OCI-LY7 (cell line): ENCODE measurements at regions of chr13 and their contacts with region 1.

Region 1: GRCh38 chr13:37944869-37945442 is 75.4 kb upstream of the TRPC4 start:
- DNase-seq: peak; percentile 1
- H3K4me3 ChIP-seq: no peak overlapping the region
- H3K27ac ChIP-seq: no peak overlapping the region
- H3K4me1 ChIP-seq: no peaks in the 10 kb centered on the region
- CTCF ChIP-seq: no peak

Region 2: GRCh38 chr13:37956536-37956935 is 11.6 kb after region 1 on chr13:
- CTCF ChIA-PET with region 1: no interaction called
- POLR2A ChIA-PET with region 1: interaction called, 16 read pairs
- intact Hi-C with region 1: no loop called
- DNase-seq: no peak
- H3K4me3 ChIP-seq: no peak overlapping the region
- H3K27ac ChIP-seq: no peak overlapping the region
- H3K4me1 ChIP-seq: no peaks in the 10 kb centered on the region
- CTCF ChIP-seq: no peak

Region 3: DNA sequence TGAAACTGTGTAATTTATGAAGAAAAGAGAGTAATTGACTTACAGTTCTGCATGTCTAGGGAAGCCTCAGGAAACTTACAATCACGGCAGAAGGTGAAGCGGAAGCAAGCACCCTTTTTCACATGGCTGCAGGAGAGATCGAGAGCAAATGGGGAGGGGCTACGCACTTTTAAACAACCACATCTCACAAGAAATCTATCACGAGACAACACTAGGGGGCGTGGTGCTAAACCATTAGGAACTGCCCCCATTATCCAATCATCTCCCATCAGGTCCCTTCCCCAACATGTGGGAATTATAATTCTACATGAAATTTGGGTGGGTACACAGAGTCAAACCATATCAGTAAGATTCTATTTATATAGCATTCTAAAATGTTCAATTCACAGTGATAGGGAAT is 39.4 kb after region 1 on chr13:
- CTCF ChIA-PET with region 1: no interaction called
- POLR2A ChIA-PET with region 1: no interaction called
- intact Hi-C with region 1: no loop called
- DNase-seq: no peak
- H3K4me3 ChIP-seq: no peak overlapping the region
- H3K27ac ChIP-seq: no peak overlapping the region
- H3K4me1 ChIP-seq: no peaks in the 10 kb centered on the region
- CTCF ChIP-seq: peak; percentile 55